HEK293T (cell line): ENCODE measurements at regions of chr3 and their contacts with region 1.

Region 1: DNA sequence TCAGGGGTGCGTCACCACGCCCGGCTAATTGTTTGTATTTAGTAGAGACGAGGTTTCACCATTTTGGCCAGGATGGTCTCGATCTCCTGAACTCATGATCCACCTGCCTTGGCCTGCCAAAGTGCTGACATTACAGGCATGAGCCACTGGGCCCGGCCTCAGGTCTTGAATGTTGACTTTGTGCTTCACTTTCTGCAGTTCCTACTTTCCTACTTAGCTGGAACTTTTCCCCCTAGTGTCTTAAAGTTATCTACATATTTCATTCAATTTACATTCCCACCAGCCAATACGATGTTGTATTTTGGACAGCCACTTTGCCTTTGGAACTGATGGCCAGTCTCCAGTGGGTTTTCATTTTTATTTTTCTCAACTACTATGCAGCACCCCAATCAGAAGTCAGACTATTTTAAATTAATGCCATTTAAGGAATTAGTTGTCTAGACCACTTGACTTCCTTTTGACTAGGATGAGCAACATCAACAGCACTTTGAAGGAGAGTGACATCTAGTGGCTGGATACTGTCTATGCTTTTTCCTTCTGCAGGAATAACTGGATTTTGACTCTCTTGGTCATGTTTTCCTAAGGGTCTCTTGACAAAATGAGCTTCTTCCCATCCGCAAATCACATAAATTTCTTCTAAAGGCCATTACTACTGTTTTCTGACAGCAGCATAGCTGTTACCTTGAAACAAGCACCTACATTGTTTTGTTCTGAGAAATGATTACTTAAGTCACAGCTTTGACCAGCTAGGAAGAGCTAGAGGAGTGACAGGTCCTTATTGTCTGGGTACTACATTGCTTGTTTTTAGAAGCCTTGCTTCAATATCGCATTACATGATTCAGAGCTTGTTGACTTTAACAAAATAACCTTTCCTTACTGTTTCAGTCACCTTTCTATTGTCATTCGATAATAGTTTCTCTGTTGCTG is 140.2 kb downstream of the ITPR1 start:
- DNase-seq: peak; percentile 62

Region 2: DNA sequence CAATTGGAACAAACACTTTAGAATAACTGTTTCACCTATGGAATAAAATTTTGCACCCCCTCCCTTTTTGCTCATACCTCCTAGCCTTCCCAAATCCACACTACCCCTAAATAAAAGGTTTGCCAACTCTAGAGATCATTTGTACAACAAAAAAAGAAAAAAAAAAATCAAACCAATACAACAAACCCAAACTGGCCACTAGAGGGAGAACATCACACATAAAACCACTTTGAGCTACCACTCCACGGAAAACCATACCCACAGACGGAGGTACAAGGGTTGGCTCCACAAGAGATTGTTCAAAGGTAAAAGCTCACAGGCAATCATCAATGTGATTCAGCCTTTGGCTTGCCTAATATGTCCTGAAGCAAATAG is 282.6 kb before region 1 on chr3:
- CTCF ChIA-PET with region 1: interaction called, 20 read pairs
- POLR2A ChIA-PET with region 1: no interaction called
- DNase-seq: peak; percentile 60

Region 3: GRCh38 chr3:4615750-4616149 is 17.6 kb before region 1 on chr3:
- CTCF ChIA-PET with region 1: no interaction called
- POLR2A ChIA-PET with region 1: no interaction called
- DNase-seq: no peak